Mammary epithelial cell (primary cell): ENCODE measurements at regions of chr21 and their contacts with region 1.

Region 1: GRCh38 chr21:41316200-41317062 is at the start of gene FAM3B:
- DNase-seq: no peak
- H3K4me3 ChIP-seq: no peak within 1 kb of the TSS
- H3K27ac ChIP-seq: no peak within 1 kb of the TSS
- H3K4me1 ChIP-seq: no peaks in the 10 kb centered on the region
- H3K27me3 ChIP-seq: peaks cover 21% of the 10 kb centered on the region
- CTCF ChIP-seq: no peak
- total RNA-seq, gene FAM3B: 0.17 TPM in 1 of 2 donors, not detected in the other

Region 2: DNA sequence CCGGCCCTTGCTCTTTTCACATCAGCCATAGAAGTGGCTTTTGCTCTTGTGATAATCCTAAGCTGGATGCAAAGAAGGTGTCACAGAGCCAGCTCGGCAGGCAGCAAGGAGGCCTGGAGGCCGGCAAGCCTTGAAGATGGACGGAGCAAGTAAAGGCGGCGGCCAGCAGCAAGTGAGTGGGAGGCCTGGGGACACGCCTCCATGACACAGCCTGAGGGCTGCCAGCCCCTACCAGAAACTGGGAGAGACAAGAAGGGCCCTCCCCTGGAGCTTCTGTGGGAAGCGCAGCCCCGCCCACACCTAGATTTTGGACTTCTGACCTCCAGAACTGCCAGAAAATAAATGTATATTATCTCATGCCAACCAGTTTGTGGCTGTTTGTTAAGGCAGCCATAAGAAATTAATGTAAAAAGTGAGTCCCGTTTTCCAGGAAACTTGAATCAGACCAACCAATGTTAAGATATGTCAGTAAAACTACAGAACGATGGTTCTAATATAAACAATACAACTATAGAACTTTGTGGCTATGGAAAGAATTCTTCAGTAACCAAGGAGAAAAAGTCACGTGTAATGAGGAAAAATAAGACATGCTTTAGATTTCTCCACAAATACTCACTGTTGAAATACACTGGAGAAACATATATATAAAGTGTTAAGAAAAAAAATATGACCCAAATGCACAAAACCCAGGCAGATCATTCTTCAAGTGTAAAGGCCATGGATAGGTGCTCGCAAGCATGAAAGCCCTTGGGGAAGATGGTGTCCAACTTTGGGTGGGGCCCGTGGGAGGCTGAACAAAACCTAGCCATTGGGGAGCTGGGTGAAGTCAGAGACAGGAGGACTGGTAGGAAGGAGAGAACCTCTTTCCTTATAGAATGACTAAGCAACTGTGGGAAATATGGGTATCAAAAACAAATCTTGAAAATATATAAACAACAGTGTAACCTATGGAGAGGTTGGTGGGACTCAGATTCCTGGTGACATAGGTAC is 98.5 kb before region 1 on chr21:
- CTCF ChIA-PET with region 1: no interaction called
- dilution Hi-C with region 1: no loop called
- in situ Hi-C with region 1: no loop called
- intact Hi-C with region 1: no loop called
- DNase-seq: peak; percentile 67
- H3K4me3 ChIP-seq: no peak overlapping the region
- H3K27ac ChIP-seq: peak overlapping the region; percentile 54
- H3K4me1 ChIP-seq: peaks cover 27% of the 10 kb centered on the region
- H3K27me3 ChIP-seq: no peaks in the 10 kb centered on the region
- CTCF ChIP-seq: no peak

Region 3: DNA sequence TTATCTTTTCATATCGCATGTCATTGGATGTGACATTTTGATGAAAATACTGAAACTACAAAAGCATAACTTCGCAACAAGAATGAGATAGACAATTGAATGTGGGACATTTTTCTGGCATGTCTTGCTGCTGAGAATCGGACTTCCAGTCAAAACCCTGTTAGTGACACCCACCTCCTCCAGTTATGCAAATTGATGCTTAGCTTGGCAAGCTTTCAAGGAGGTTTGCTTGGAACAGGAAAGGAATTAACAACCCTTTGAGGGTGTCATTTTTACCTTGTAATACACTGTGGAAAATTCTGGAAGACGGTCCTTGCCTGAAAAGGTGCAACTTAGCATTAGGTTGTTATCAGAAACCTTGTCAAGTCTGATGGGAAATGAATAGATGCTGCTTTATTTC is 38.6 kb before region 1 on chr21:
- CTCF ChIA-PET with region 1: no interaction called
- dilution Hi-C with region 1: loop called (anchors 5 kb)
- in situ Hi-C with region 1: no loop called
- intact Hi-C with region 1: no loop called
- DNase-seq: no peak
- H3K4me3 ChIP-seq: no peak overlapping the region
- H3K27ac ChIP-seq: no peak overlapping the region
- H3K4me1 ChIP-seq: no peaks in the 10 kb centered on the region
- H3K27me3 ChIP-seq: no peaks in the 10 kb centered on the region
- CTCF ChIP-seq: no peak

Region 4: GRCh38 chr21:41374867-41375533 is 58.6 kb after region 1 on chr21:
- CTCF ChIA-PET with region 1: no interaction called
- dilution Hi-C with region 1: loop called (anchors 5 kb)
- in situ Hi-C with region 1: no loop called
- intact Hi-C with region 1: no loop called
- DNase-seq: peak; percentile 62
- H3K4me3 ChIP-seq: no peak overlapping the region
- H3K27ac ChIP-seq: no peak overlapping the region
- H3K4me1 ChIP-seq: no peaks in the 10 kb centered on the region
- H3K27me3 ChIP-seq: no peaks in the 10 kb centered on the region
- CTCF ChIP-seq: no peak